H1 (cell line): ENCODE measurements at regions of chr5 and their contacts with region 1.

Region 1: GRCh38 chr5:57298295-57298984 is 124.6 kb downstream of the GPBP1 start:
- DNase-seq: peak in 1 of 2 experiments; percentile 88
- H3K4me3 ChIP-seq: no peak overlapping the region
- H3K27ac ChIP-seq: no peak overlapping the region
- H3K4me1 ChIP-seq: peaks cover 0 to 10% (median 5%) of the 10 kb centered on the region in 4 experiments; a peak in 3 of 7 replicates
- H3K27me3 ChIP-seq: no peaks in the 10 kb centered on the region
- CTCF ChIP-seq: peak; percentile 16 to 80 (median 76)
- EP300 ChIP-seq: no peak
- POLR2A ChIP-seq: no peak
- RAD21 ChIP-seq: peak; percentile 85 to 87

Region 2: DNA sequence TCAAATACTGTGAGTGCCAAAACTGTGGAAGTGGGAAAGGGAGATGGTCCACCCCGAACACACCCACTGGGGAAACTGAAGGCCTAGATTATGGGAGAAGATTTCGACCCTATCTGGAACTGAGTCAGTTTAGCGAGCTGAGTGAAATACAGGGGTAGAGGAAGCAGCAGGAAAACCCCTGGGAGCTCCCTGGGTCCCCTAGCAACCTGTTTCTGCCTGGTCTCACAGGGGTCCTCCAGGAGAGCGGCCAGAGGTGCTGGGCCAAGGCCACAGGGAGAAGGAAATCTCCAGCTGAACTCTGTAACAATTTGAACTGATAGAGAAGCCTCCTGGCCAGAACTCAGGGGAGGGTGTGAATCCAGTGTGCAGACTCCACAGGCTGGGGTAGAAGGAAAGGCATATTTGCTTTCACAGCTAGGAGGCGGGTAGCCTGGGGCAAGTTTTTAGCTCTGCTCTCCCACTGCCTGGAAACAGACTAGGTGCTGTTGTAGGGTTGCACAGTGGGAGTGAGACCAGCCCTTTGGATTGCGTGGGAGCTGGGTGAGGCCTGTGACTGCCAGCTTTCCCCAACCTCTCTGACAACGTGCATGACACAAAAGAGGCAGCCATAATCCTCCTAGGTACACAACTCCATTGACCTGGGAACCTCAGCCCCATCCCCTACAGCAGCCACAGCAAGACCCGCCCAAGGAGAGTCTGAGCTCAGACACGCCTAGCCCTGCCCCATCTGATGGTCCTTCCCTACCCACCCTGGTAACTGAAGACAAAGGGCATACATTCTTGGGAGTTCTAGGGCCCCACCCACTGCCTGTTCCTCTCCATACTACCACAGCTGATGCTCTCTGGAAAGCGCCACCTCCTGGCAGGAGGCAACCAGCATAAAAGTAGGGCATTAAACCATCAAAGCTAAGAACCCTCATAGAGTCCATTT is 203.4 kb before region 1 on chr5:
- CTCF ChIA-PET with region 1: no interaction called
- POLR2A ChIA-PET with region 1: no interaction called
- DNase-seq: peak; percentile 15 to 78
- H3K4me3 ChIP-seq: no peak overlapping the region
- H3K27ac ChIP-seq: no peak overlapping the region
- H3K4me1 ChIP-seq: peaks cover 0 to 3% (median under 1%) of the 10 kb centered on the region in 4 experiments; a peak in 1 of 7 replicates
- H3K27me3 ChIP-seq: no peaks in the 10 kb centered on the region
- CTCF ChIP-seq: peak; percentile 51 to 73 (median 66)
- EP300 ChIP-seq: no peak
- POLR2A ChIP-seq: no peak
- RAD21 ChIP-seq: peak; percentile 51 to 60

Region 3: GRCh38 chr5:57327561-57328394 is 29.3 kb after region 1 on chr5:
- CTCF ChIA-PET with region 1: interaction called, 25 read pairs
- POLR2A ChIA-PET with region 1: no interaction called
- DNase-seq: no peak
- H3K4me3 ChIP-seq: no peak overlapping the region
- H3K27ac ChIP-seq: no peak overlapping the region
- H3K4me1 ChIP-seq: no peaks in the 10 kb centered on the region
- H3K27me3 ChIP-seq: no peaks in the 10 kb centered on the region
- CTCF ChIP-seq: no peak
- EP300 ChIP-seq: no peak
- POLR2A ChIP-seq: no peak
- RAD21 ChIP-seq: no peak

Region 4: GRCh38 chr5:57429513-57430120 is 131.2 kb after region 1 on chr5:
- CTCF ChIA-PET with region 1: interaction called, 15 read pairs
- POLR2A ChIA-PET with region 1: no interaction called
- DNase-seq: no peak
- H3K4me3 ChIP-seq: no peak overlapping the region; a peak in 1 of 8 replicates
- H3K27ac ChIP-seq: no peak overlapping the region
- H3K4me1 ChIP-seq: no peaks in the 10 kb centered on the region
- H3K27me3 ChIP-seq: no peaks in the 10 kb centered on the region
- CTCF ChIP-seq: no peak
- EP300 ChIP-seq: no peak
- POLR2A ChIP-seq: no peak
- RAD21 ChIP-seq: no peak